Heart right ventricle (tissue), 16 donors: ENCODE measurements at regions of chr20 and their contacts with region 1.

Region 1: GRCh38 chr20:2451939-2452732 is 18.5 kb downstream of the SNRPB start:
- DNase-seq: peak; percentile 50 to 75
- ATAC-seq: peak in 5 of 8 donors; percentile 55 to 77 (median 67)
- H3K4me3 ChIP-seq: no peak overlapping the region
- H3K27ac ChIP-seq: no peak overlapping the region
- H3K4me1 ChIP-seq: peaks cover 0 to 6% (median 0%) of the 10 kb centered on the region in 9 donors
- H3K27me3 ChIP-seq: no peaks in the 10 kb centered on the region
- CTCF ChIP-seq: peak; percentile 71 to 88 (median 84)

Region 2: GRCh38 chr20:1776681-1777475 is 675.3 kb before region 1 on chr20:
- intact Hi-C with region 1: loop called in 1 of 10 experiments (anchors 10 kb)
- DNase-seq: peak; percentile 88 to 90
- ATAC-seq: peak; percentile 94 to 100 (median 98)
- H3K4me3 ChIP-seq: peak overlapping the region; percentile 56 to 79 (median 71)
- H3K27ac ChIP-seq: peak overlapping the region in 8 of 10 donors; percentile 57 to 80 (median 70)
- H3K4me1 ChIP-seq: peaks cover 8 to 21% (median 10%) of the 10 kb centered on the region in 9 donors
- H3K27me3 ChIP-seq: peaks cover 0 to 3% (median 0%) of the 10 kb centered on the region in 7 donors
- CTCF ChIP-seq: peak; percentile 79 to 90 (median 84)

Region 3: GRCh38 chr20:2086177-2086979 is 365.8 kb before region 1 on chr20:
- intact Hi-C with region 1: loop called in 2 of 10 experiments (anchors 10 kb)
- DNase-seq: no peak
- ATAC-seq: peak in 5 of 8 donors; percentile 51 to 70 (median 62)
- H3K4me3 ChIP-seq: no peak overlapping the region
- H3K27ac ChIP-seq: no peak overlapping the region
- H3K4me1 ChIP-seq: no peaks in the 10 kb centered on the region
- H3K27me3 ChIP-seq: peaks cover 0 to 41% (median 17%) of the 10 kb centered on the region in 7 donors
- CTCF ChIP-seq: peak in 7 of 9 donors; percentile 20 to 47 (median 38)

Region 4: GRCh38 chr20:2349818-2350508 is 102.2 kb before region 1 on chr20:
- intact Hi-C with region 1: loop called in 1 of 10 experiments (anchors 2 kb)
- DNase-seq: no peak
- ATAC-seq: no peak
- H3K4me3 ChIP-seq: no peak overlapping the region
- H3K27ac ChIP-seq: no peak overlapping the region
- H3K4me1 ChIP-seq: peaks cover 0 to 6% (median 0%) of the 10 kb centered on the region in 9 donors
- H3K27me3 ChIP-seq: peaks cover 0 to 56% (median 44%) of the 10 kb centered on the region in 7 donors
- CTCF ChIP-seq: no peak

Region 5: DNA sequence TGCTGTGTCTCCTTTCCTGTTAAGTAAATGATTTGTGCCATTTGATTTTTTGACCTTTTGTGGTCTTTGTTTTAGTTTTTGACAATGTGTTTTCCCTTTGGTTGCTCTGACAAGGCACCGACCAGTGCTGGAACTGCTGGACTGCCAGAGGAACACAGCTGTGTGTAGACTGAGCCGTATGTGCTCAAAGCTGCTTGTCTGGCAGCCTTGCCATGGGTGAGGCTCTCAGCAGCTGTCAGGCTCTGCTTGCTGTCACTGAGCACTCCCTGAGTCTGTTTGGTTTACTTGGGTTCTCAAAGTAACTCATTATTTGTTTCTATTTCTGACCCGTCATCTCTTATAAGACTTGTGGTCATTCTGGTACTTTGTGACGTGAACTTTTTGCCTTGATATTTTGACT is 33.5 kb after region 1 on chr20:
- intact Hi-C with region 1: loop called in 1 of 10 experiments (anchors 1 kb)
- DNase-seq: peak; percentile 48 to 57
- ATAC-seq: peak; percentile 90 to 99 (median 96)
- H3K4me3 ChIP-seq: no peak overlapping the region
- H3K27ac ChIP-seq: peak overlapping the region in 6 of 10 donors; percentile 10 to 60 (median 52)
- H3K4me1 ChIP-seq: peaks cover 0 to 14% (median 5%) of the 10 kb centered on the region in 9 donors
- H3K27me3 ChIP-seq: no peaks in the 10 kb centered on the region
- CTCF ChIP-seq: no peak